ENCODE measurements at regions of chr18 and their contacts with region 1.

Region 1: DNA sequence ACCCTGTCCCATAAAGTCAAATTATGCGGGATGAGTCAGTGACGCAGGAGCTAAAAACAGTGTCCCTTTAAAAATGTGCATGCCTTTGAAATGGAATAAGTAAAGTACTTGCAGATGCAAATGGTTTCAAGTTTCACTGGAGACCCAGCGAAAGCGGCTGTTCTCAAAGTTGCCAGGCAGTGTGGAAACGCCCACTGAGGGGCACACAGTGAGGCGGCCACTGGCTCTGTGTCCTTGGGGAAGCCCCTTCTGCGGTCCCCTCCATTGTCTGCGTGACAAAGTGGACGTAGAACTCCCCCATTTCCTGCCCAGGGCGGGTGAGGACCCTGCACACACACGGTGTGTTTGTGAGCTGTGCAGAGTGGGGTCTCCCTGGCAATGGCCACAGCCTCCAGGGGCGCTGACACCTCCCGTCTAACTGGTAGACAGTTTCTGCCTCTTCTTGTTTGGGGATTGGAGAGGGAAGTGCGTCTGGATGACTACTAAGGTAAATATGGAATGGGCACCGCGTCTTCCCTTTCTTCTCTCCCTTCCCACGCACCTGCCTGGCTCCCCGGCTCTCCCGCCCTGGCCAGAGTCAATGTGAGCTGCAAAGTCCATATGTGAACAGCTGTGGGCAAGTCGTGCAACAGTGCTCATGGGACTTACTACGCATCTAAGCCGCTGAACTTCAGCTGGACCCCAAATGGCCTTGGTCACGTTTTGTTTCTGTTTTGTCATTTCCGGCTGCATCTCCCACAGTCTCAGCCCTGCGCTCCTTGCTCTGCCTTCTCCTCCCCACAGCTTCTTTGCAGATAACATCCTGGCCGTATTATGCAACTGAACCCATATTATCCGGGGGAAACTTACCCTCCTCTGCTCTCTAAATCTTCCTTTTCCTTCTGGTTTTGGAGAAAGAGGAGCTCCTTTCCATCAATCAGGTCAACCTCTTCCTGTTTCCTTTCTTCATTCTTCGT is 33.7 kb upstream of the ZNF516 start:
- DNase-seq: peak; percentile 13 to 43
- H3K4me3 ChIP-seq: peak overlapping the region; percentile 49
- H3K27ac ChIP-seq: no peak overlapping the region
- H3K4me1 ChIP-seq: peaks cover 35% of the 10 kb centered on the region
- H3K27me3 ChIP-seq: no peaks in the 10 kb centered on the region
- CTCF ChIP-seq: no peak

Region 2: GRCh38 chr18:76558881-76559678 is 30.3 kb after region 1 on chr18:
- CTCF ChIA-PET with region 1: no interaction called
- POLR2A ChIA-PET with region 1: no interaction called
- intact Hi-C with region 1: loop called (anchors 1 kb)
- DNase-seq: peak; percentile 78 to 95
- H3K4me3 ChIP-seq: peak overlapping the region; percentile 51; the same call in 1 of the 2 replicates
- H3K27ac ChIP-seq: peak overlapping the region; percentile 90
- H3K4me1 ChIP-seq: peaks cover 52% of the 10 kb centered on the region
- H3K27me3 ChIP-seq: no peaks in the 10 kb centered on the region
- CTCF ChIP-seq: no peak

Region 3: GRCh38 chr18:76573325-76574025 is 44.7 kb after region 1 on chr18:
- CTCF ChIA-PET with region 1: no interaction called
- POLR2A ChIA-PET with region 1: no interaction called
- intact Hi-C with region 1: loop called (anchors 5 kb)
- DNase-seq: peak; percentile 29 to 82
- H3K4me3 ChIP-seq: no peak overlapping the region
- H3K27ac ChIP-seq: peak overlapping the region; percentile 88
- H3K4me1 ChIP-seq: peaks cover 26% of the 10 kb centered on the region
- H3K27me3 ChIP-seq: no peaks in the 10 kb centered on the region
- CTCF ChIP-seq: no peak

Measured in PC-9 (cell line).